ENCODE measurements at regions of chr1 and their contacts with region 1.

Region 1: DNA sequence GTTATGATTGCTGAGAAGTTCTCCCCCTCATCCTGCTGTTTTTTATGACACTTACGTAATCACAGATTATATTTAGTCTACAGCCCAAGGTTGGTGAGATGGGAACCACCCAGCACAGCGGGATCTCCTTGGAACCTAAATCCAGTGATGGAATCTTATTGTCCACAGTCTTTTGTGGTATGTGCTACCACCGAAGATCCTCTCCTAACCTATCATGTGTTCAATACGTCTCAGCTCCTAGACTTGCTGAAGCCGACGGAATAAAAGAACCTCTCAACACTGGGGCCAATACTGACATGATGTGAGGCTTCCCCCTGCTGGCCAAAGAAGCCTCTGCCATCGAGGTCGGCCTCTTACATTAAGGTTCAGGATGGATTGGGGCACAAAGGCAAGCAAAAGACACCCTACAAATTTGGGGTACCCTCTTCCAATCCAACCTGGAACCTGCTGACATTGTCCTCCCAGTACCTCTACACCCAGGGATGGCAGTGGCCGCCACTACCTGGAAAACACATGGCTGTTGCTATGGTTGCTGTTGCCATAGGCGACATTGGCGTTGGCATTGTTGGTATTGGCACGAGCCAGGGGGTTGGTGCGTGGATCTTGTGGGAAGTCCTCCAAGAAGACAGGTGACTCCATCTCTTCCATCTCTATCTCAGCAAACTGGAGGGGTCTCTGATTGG is 19.4 kb upstream of the KIF21B start:
- DNase-seq: peak; percentile 73
- H3K4me3 ChIP-seq: no peak overlapping the region
- H3K27ac ChIP-seq: no peak overlapping the region
- H3K4me1 ChIP-seq: no peaks in the 10 kb centered on the region
- H3K27me3 ChIP-seq: no peaks in the 10 kb centered on the region
- CTCF ChIP-seq: peak; percentile 88

Region 2: DNA sequence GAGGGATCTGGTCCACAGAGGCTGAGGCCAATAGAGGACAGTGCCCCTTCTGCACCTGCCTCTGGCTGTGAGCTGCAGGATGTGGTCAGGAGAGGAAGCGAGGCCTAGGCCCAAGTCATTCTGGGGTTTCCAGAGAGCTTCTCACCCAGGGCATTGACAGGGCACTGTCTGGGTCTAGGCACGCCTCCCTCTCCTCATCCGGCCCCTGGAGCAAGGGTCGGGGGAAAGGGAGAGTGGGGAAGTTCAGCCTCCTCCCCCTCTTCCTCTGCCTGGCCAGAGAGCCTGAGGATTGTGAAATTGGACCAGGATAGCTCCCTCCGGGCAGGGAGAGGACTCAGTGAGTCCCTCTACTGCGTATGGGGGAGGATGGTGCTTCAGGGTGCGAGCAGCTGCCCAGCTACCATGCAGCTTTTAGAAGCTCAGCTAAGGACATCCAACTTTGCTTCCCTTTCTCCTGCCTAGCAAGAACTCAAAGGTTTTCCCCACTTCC is 154.5 kb before region 1 on chr1:
- intact Hi-C with region 1: loop called (anchors 10 kb)
- DNase-seq: no peak
- H3K4me3 ChIP-seq: no peak overlapping the region
- H3K27ac ChIP-seq: no peak overlapping the region
- H3K4me1 ChIP-seq: no peaks in the 10 kb centered on the region
- H3K27me3 ChIP-seq: no peaks in the 10 kb centered on the region
- CTCF ChIP-seq: no peak

Region 3: DNA sequence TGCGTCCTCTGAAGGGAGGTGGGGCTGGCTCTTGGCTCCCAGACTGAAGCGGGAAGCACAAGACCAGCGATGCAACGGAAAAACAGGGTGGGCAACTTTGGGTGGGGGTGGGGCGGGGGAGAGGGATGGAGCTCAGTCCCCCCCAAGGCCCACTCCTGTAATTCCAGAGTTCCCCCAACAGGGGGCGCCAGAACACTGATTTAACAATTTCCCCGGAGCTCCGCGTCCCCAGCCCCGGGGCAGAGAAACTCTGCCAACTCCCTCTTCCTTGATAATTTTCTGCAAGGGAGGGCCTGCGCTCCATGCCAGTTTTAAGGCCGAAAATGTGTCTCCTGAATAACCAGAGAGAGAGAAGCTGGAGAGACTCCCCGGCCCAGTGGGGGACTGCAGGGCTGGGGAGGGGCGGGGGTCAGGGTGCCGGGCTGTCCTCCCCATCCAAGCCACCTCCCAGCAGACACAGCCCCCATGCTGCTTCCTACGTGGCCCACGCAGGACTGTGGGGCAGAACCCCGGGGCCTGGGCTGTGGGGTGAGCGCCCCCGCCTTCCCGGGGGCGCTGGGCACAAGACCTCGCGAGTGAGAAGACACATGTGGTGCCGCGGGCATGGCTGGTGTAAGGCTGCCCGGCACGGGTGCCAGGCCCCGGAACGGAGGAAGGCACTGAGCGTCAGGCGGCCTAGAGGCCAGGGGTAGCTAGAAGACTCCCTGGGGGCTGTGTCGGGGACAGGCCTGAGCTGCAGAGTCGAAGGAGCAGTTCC is 70.8 kb before region 1 on chr1:
- intact Hi-C with region 1: loop called (anchors 2 kb)
- DNase-seq: peak; percentile 72
- H3K4me3 ChIP-seq: no peak overlapping the region
- H3K27ac ChIP-seq: no peak overlapping the region
- H3K4me1 ChIP-seq: no peaks in the 10 kb centered on the region
- H3K27me3 ChIP-seq: no peaks in the 10 kb centered on the region
- CTCF ChIP-seq: peak; percentile 99

Region 4: GRCh38 chr1:201059871-201060555 is 17.1 kb after region 1 on chr1:
- intact Hi-C with region 1: no loop called
- DNase-seq: no peak
- H3K4me3 ChIP-seq: no peak overlapping the region
- H3K27ac ChIP-seq: no peak overlapping the region
- H3K4me1 ChIP-seq: no peaks in the 10 kb centered on the region
- H3K27me3 ChIP-seq: no peaks in the 10 kb centered on the region
- CTCF ChIP-seq: no peak